ENCODE measurements at regions of chr3 and their contacts with region 1.

Region 1: DNA sequence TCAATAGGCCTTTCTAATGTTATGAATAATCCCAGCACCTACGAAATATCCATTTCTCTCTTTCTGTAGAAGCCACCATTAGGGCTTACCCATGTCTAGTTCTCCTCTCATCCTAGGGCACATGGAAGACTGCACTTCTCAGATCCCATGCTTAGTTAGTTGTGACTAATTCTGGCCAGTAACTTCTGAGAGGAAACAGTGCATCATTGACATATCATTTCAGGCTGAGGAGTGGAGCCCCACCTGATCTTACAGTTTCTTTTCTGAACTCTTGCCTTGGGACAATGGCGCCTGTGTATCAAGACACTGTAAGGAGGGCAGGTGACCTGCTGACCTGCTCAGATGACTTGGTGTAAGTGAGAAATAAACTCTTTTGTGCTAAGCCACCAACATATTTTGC is 39.4 kb upstream of the TBL1XR1 start:
- DNase-seq: no peak
- H3K4me3 ChIP-seq: no peak overlapping the region
- H3K27ac ChIP-seq: no peak overlapping the region
- H3K27me3 ChIP-seq: no peaks in the 10 kb centered on the region
- CTCF ChIP-seq: no peak

Region 2: GRCh38 chr3:177220136-177220974 is 16.3 kb before region 1 on chr3:
- intact Hi-C with region 1: loop called in 1 of 2 experiments (anchors 1 kb)
- DNase-seq: no peak
- H3K4me3 ChIP-seq: no peak overlapping the region
- H3K27ac ChIP-seq: no peak overlapping the region
- H3K27me3 ChIP-seq: no peaks in the 10 kb centered on the region
- CTCF ChIP-seq: no peak